HEK293 (cell line): ENCODE measurements at regions of chr6 and their contacts with region 1.

Region 1: GRCh38 chr6:159862103-159862502 is 28.7 kb upstream of the MAS1 start:
- H3K4me3 ChIP-seq: no peak overlapping the region
- H3K27ac ChIP-seq: no peak overlapping the region
- H3K4me1 ChIP-seq: no peaks in the 10 kb centered on the region
- CTCF ChIP-seq: no peak

Region 2: DNA sequence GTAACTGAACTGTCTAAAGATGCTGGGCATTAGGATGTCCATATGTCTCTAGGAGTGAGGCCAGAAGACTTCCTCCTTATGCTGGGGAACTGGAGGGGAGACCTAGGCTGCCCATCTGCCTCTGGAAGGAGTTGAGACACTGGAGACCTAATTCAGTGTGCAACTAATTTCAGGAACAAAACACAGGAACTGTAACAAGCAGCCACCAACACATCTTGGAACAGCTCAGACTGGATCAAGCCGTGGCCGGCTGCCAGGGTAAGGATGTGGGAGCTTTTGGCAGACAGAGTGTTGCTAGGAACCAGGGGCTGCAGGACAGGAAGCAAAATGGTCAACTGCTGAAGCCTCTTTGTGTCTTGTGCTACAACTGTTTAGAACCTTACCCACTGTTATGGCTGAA is 12.3 kb after region 1 on chr6:
- CTCF ChIA-PET with region 1: interaction called, 10 read pairs
- POLR2A ChIA-PET with region 1: no interaction called
- H3K4me3 ChIP-seq: no peak overlapping the region
- H3K27ac ChIP-seq: no peak overlapping the region
- H3K4me1 ChIP-seq: no peaks in the 10 kb centered on the region
- CTCF ChIP-seq: no peak

Region 3: GRCh38 chr6:159919011-159919511 is 57.0 kb after region 1 on chr6:
- CTCF ChIA-PET with region 1: no interaction called
- POLR2A ChIA-PET with region 1: no interaction called
- H3K4me3 ChIP-seq: no peak overlapping the region
- H3K27ac ChIP-seq: no peak overlapping the region
- H3K4me1 ChIP-seq: no peaks in the 10 kb centered on the region
- CTCF ChIP-seq: no peak

Region 4: GRCh38 chr6:159941286-159942113 is 79.4 kb after region 1 on chr6:
- CTCF ChIA-PET with region 1: interaction called, 52 read pairs
- POLR2A ChIA-PET with region 1: no interaction called
- H3K4me3 ChIP-seq: no peak overlapping the region
- H3K27ac ChIP-seq: no peak overlapping the region
- H3K4me1 ChIP-seq: no peaks in the 10 kb centered on the region
- CTCF ChIP-seq: peak; percentile 69

Region 5: DNA sequence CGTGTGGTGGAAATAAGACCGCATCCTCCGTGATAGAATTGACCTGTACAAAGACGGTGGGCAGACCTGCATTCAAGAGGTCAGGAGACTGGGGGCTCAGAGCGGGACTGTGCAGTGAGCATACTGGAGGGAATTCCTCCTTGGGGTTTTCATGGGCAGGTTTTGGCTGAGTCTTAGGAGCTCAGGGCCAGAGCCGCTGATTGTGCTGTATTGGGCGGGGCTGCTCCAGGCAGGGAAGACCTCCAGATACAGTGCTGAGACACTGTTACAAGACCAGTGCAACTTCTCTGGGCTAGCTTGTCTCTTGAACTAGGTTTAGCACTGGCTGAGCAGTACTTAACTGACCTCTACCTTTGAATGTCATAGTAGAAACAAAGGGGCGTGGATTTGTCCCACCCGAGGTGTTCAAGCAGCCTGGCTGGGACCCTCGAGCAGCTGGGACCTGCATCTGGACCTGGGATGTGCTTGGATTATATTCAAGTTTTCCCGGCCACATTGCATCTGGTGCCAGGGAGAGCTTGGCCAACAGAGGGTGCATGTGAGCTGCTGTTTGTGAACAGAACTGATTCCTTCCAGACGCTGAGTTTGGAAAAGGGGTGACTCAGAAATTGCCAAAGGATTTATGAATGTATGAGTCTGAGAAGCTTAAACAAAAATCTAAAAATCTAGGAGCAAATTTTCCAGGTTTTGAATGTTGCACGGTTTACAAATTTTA is 226.1 kb after region 1 on chr6:
- CTCF ChIA-PET with region 1: interaction called, 16 read pairs
- POLR2A ChIA-PET with region 1: no interaction called
- H3K4me3 ChIP-seq: no peak overlapping the region
- H3K27ac ChIP-seq: no peak overlapping the region
- H3K4me1 ChIP-seq: no peaks in the 10 kb centered on the region
- CTCF ChIP-seq: no peak

Region 6: GRCh38 chr6:160102956-160103824 is 241.1 kb after region 1 on chr6:
- CTCF ChIA-PET with region 1: interaction called, 12 read pairs
- POLR2A ChIA-PET with region 1: no interaction called
- H3K4me3 ChIP-seq: no peak overlapping the region
- H3K27ac ChIP-seq: no peak overlapping the region
- H3K4me1 ChIP-seq: no peaks in the 10 kb centered on the region
- CTCF ChIP-seq: no peak